GM10248 (cell line): ENCODE measurements at regions of chr5 and their contacts with region 1.

Region 1: GRCh38 chr5:173721256-173722232 is 105.1 kb upstream of the BOD1 start:
- DNase-seq: no peak
- CTCF ChIP-seq: no peak

Region 2: DNA sequence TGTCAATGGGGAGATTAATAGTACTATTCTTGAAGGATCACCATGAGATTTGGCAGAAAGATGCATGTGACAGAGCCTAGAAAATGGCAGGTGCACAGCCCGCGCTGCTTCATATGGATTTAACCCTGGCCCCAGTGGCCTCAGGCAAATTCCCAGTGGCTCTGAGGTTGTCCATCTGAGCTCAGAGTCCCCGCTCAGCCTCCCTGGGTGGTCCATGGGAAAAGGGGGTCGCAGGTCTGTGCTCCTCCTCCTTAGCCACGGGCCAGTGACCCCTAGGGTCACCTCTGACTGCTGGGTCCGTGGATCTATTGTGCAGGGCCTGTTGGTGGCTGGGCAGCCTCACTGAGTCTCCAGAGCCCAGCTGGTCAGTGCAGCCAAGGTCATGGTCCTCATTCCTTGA is 11.8 kb before region 1 on chr5:
- CTCF ChIA-PET with region 1: interaction called, 10 read pairs
- POLR2A ChIA-PET with region 1: no interaction called
- DNase-seq: no peak
- CTCF ChIP-seq: no peak

Region 3: DNA sequence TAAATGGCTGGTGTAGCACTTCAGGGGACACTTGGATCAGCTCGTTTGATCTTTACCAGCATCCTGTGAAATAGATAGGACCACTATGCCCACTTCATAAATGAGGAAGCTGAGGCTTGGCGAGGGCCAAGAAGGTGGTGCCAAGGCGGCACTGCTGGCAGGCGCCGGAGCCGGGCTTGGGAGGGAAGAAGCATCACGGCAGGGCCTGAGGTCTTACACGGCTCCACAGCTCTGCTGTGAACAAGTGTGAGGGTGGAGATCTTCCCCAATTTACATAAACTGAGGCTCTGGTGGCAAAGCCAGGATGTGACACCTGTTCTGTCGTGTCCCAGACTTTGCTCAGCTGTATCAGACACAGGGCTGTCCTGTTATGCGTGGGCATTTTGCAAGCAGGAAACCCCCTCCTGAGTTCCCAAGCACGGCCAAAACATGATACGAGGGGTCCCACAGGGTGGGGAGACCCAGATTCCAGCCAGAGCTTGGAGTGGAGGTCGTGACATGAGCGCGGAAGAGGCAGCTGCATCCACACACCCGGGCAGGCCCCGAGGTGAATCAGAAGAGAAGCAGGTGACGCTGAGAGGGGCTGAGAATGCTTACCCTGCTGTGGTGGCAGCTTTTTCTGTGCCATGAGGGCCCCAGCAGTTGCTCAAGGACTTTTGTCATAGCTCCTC is 12.4 kb after region 1 on chr5:
- CTCF ChIA-PET with region 1: interaction called, 30 read pairs
- POLR2A ChIA-PET with region 1: interaction called, 4 read pairs
- DNase-seq: peak; percentile 82
- CTCF ChIP-seq: no peak

Region 4: GRCh38 chr5:173745123-173745522 is 23.6 kb after region 1 on chr5:
- CTCF ChIA-PET with region 1: no interaction called
- POLR2A ChIA-PET with region 1: no interaction called
- DNase-seq: peak; percentile 40
- CTCF ChIP-seq: no peak